GM10248 (cell line): ENCODE measurements at regions of chr11 and their contacts with region 1.

Region 1: GRCh38 chr11:115144914-115145313 is 359.3 kb downstream of the CADM1 start:
- DNase-seq: no peak
- CTCF ChIP-seq: no peak

Region 2: GRCh38 chr11:115132436-115133228 is 12.3 kb before region 1 on chr11:
- CTCF ChIA-PET with region 1: interaction called, 10 read pairs
- POLR2A ChIA-PET with region 1: no interaction called
- DNase-seq: peak; percentile 46
- CTCF ChIP-seq: peak; percentile 33

Region 3: GRCh38 chr11:115193914-115194801 is 49.2 kb after region 1 on chr11:
- CTCF ChIA-PET with region 1: no interaction called
- POLR2A ChIA-PET with region 1: no interaction called
- DNase-seq: peak; percentile 22
- CTCF ChIP-seq: no peak